ENCODE measurements at regions of chr11 and their contacts with region 1.

Region 1: GRCh38 chr11:48109046-48109666 is 107.5 kb upstream of the OR4B1 start:
- DNase-seq: peak; percentile 63
- H3K4me3 ChIP-seq: no peak overlapping the region
- H3K27ac ChIP-seq: no peak overlapping the region
- H3K4me1 ChIP-seq: peaks cover 4% of the 10 kb centered on the region
- H3K27me3 ChIP-seq: no peaks in the 10 kb centered on the region
- CTCF ChIP-seq: peak; percentile 6 to 14
- POLR2A ChIP-seq: no peak

Region 2: DNA sequence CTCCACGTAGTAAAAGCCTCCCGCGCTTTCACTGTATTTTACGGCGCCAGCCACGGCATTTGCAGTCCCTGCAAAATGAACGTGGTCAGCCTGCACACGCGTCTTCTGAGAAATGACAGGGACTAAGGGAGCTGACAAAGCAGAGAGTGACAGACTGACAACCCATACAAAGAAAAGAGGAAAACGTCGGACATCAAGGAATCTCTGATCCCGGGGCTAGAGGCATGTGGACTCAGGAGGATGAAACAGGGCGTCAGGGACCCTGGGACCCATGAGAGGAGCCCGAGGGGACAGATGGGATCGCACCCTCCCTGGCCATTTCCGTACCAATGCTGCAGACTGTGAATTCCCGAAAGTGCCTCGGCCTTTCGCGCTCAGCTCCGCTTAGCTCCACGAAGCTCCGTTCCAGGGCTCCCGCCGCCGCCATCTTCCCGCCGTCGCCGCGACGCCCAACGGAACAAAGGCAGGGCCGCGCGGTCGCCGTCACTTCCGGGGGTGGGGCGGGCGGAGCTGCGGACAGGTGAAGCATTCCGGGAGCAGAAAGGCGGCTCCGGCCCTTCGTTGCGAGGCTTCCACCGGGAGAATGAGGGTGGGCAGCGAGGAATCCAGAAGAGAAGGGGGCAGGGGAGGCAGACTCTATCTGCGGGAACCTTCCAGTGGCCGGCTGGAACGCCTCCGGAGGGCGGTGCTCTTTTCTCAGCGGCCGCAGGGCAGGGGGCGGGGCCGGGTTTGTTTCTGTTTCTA is 261.1 kb before region 1 on chr11 and contains the start of gene NUP160:
- CTCF ChIA-PET with region 1: interaction called, 7 read pairs
- POLR2A ChIA-PET with region 1: no interaction called
- dilution Hi-C with region 1: no loop called
- intact Hi-C with region 1: loop called (anchors 1 kb)
- DNase-seq: peak; percentile 74
- H3K4me3 ChIP-seq: peak within 1 kb of the TSS; percentile 9 to 88 (median 68)
- H3K27ac ChIP-seq: peak within 1 kb of the TSS; percentile 56
- H3K4me1 ChIP-seq: peaks cover 10% of the 10 kb centered on the region
- H3K27me3 ChIP-seq: no peaks in the 10 kb centered on the region
- CTCF ChIP-seq: no peak
- POLR2A ChIP-seq: peak; percentile 94
- total RNA-seq, gene NUP160: 35.1 and 39.6 TPM in 2 replicates

Region 3: GRCh38 chr11:47932544-47932943 is 176.6 kb before region 1 on chr11:
- CTCF ChIA-PET with region 1: interaction called, 326 read pairs
- POLR2A ChIA-PET with region 1: no interaction called
- dilution Hi-C with region 1: no loop called
- intact Hi-C with region 1: loop called (anchors 1 kb)
- DNase-seq: no peak
- H3K4me3 ChIP-seq: no peak overlapping the region
- H3K27ac ChIP-seq: no peak overlapping the region
- H3K4me1 ChIP-seq: no peaks in the 10 kb centered on the region
- H3K27me3 ChIP-seq: no peaks in the 10 kb centered on the region
- CTCF ChIP-seq: no peak
- POLR2A ChIP-seq: no peak

Region 4: DNA sequence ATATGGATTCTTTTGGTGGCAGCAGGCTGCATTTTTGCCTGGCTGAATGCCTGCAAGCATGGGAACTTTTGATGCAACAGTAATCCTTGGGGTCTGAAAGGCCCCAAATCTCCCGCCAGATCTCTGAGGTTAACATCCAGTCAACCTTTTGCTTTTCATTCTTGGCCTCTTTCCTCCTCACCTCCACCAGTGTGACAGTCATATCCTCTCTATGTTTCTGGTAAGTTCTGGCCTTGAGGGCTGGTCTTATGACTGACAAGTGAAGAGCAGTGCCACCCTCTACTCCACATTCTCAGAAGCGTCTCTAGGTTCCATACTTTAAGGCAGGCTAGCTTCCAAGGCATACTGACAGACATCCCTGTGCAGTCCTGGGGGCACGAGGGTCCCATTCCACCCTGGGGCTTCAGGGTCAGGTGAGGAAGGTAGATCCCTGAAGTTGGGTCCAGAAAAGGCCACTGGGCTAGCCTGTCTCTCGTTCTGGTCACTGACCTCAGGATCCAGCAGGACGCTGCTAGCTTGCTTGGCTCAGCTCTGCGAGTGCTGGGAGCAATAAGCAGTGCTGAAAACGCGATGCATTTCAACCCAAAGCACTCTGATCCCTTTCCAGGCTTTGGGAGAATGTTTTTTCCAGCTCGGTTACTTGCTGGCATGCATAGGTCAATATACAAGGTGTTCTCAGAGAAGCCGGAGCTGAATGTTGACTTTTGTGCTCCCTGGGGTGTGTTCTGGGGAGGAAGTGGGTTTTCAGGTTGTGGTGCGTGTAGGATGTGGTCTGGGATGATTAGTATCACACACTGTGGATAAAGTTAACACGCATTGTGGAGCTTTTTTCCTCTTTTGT is 53.6 kb before region 1 on chr11:
- CTCF ChIA-PET with region 1: interaction called, 10 read pairs
- POLR2A ChIA-PET with region 1: no interaction called
- dilution Hi-C with region 1: no loop called
- intact Hi-C with region 1: no loop called
- DNase-seq: no peak
- H3K4me3 ChIP-seq: no peak overlapping the region
- H3K27ac ChIP-seq: no peak overlapping the region
- H3K4me1 ChIP-seq: no peaks in the 10 kb centered on the region
- H3K27me3 ChIP-seq: no peaks in the 10 kb centered on the region
- CTCF ChIP-seq: no peak
- POLR2A ChIP-seq: no peak

Region 5: GRCh38 chr11:48154151-48154550 is 45.0 kb after region 1 on chr11:
- CTCF ChIA-PET with region 1: no interaction called
- POLR2A ChIA-PET with region 1: no interaction called
- dilution Hi-C with region 1: no loop called
- intact Hi-C with region 1: no loop called
- DNase-seq: peak; percentile 85
- H3K4me3 ChIP-seq: no peak overlapping the region
- H3K27ac ChIP-seq: peak overlapping the region; percentile 98
- H3K4me1 ChIP-seq: peaks cover 28% of the 10 kb centered on the region
- H3K27me3 ChIP-seq: no peaks in the 10 kb centered on the region
- CTCF ChIP-seq: no peak
- POLR2A ChIP-seq: peak; percentile 23